CD8-positive, alpha-beta memory T cell (primary cell): ENCODE measurements at regions of chr17 and their contacts with region 1.

Region 1: DNA sequence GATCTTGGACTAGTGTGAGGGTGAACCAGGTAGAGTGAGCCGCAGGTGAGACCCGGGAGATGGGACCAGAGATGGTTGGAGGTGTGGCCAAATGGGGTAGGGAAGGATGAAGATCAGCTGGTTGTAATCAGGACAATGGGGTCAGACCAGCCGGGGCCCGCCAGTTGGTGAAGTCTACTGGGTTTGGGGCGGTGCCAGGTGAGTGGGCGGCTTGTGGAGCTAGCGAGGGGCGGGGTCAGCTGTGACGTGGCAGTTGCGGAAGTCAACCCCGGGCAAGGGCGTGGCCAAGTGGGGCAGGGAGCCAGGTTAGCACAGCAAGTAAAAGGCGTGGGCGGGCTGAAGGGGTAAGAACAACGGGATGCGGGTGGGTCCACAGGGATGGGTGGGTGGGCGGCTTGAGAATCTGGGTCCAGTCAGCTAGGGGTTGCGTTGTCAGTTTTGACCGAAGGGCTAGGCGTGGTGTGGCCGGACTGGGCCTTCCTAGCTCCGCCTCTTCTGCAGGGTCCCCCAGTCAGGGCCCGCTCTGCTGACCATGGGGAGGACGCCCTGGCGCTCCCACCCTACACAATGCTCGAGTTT is 25.5 kb upstream of the ALKBH5 start:
- DNase-seq: peak; percentile 89 to 96 (median 92)
- H3K4me3 ChIP-seq: peak overlapping the region; percentile 51
- H3K4me3 Mint-ChIP-seq: peak overlapping the region; percentile 78 to 92 (median 85)
- H3K27ac ChIP-seq: peak overlapping the region; percentile 14
- H3K27ac Mint-ChIP-seq: peak overlapping the region; percentile 67 to 96 (median 90)
- H3K4me1 ChIP-seq: peaks cover 7% of the 10 kb centered on the region
- H3K4me1 Mint-ChIP-seq: peaks cover 5 to 35% (median 16%) of the 10 kb centered on the region in 3 donors
- H3K27me3 ChIP-seq: no peaks in the 10 kb centered on the region
- H3K27me3 Mint-ChIP-seq: no peaks in the 10 kb centered on the region

Region 2: DNA sequence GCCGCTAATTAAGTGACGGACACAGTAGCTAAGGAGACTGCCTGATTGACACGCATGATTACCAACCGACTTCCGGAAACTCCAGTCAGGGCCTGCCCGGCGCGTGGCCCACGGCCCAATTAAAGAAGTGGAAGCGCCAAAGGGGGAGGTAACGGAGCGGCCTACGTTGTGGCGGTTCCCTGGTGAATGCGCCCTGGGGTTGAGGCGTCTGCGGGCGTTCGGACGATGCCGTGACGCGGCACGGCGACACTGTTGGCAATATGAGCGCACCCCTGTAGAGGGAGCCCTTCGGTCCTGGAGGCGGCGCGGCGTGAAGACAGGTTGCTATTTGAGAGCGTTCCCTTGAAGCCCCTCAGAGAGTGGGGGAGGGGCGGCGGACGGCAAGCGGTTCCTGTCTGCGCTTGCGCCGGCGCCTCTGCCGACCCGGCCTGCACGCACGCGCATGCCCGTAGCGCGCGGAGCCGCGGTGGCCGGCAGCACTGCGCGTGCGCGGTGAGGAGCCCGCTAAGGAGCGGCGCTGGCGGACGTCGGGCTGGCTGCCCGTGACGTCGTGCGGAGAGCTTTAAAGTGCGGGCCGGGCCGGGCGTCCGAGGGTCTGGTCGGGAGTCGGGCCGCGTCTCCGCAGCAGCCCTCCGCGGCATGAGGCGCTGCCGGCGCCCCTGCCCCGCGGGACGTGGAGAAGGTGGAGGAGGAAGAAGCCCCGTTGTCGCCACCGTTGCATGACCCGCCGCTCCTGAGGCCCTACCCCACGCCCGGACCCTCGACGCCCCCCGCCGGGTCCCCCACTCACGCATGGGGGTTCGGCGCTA is 25.4 kb after region 1 on chr17 and contains the start of gene ALKBH5:
- CTCF ChIA-PET with region 1: interaction called, 3 read pairs
- POLR2A ChIA-PET with region 1: interaction called, 10 read pairs
- DNase-seq: peak; percentile 94 to 99 (median 99)
- H3K4me3 ChIP-seq: peak within 1 kb of the TSS; percentile 95
- H3K4me3 Mint-ChIP-seq: peak within 1 kb of the TSS; percentile 94 to 98 (median 96)
- H3K27ac ChIP-seq: peak within 1 kb of the TSS; percentile 97
- H3K27ac Mint-ChIP-seq: peak within 1 kb of the TSS; percentile 97 to 100 (median 99)
- H3K4me1 ChIP-seq: peaks cover 47% of the 10 kb centered on the region
- H3K4me1 Mint-ChIP-seq: peaks cover 41 to 49% (median 47%) of the 10 kb centered on the region in 3 donors
- H3K27me3 ChIP-seq: no peaks in the 10 kb centered on the region
- H3K27me3 Mint-ChIP-seq: peaks cover 0 to 1% of the 10 kb centered on the region in 2 donors
- total RNA-seq, gene ALKBH5: 117 to 123 TPM

Region 3: DNA sequence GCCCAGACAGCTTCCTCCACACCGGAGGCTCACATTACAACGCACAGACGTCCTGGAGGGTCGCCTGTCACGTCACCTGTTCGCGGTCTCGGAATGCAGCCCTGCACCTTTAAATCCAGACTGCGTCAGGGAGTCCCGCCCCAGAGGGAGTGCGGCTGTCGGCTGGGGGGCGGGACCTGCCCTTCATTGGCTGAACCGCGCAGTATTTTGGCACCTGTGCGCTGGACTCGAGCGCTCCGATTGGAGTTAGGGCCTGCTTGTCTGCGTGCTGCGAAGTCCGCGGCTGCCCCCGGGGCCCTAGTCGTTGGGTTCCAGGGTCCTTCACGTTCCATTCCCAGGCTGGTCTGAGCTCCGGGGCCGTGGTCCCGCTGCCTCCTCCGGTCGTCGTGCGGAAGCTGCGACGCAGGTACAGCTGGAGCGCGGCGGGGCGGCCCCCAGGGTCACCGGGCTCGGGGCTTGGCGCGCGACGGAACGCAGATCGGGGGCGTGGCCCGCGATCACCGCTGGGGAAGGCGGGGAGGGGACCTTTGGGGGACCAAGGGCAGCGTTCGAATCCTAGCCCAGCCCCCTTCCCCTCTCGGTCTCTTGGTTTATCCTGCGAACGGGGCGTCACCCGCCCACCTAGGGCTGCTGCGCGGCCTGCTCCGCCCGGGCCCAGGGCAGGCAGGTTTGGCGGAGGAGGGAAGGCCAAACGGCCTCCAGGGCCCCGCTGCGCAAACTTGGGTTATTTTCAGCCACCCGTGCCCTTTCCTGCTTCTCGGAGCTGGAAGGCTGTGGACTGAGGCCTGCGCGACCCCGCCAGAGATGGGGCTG is 102.4 kb after region 1 on chr17 and contains the start of gene MIEF2:
- CTCF ChIA-PET with region 1: no interaction called
- POLR2A ChIA-PET with region 1: no interaction called
- DNase-seq: peak; percentile 88 to 95 (median 90)
- H3K4me3 ChIP-seq: peak within 1 kb of the TSS; percentile 89
- H3K4me3 Mint-ChIP-seq: peak within 1 kb of the TSS; percentile 80 to 97 (median 84)
- H3K27ac ChIP-seq: peak within 1 kb of the TSS; percentile 86
- H3K27ac Mint-ChIP-seq: peak within 1 kb of the TSS; percentile 82 to 93 (median 86)
- H3K4me1 ChIP-seq: peaks cover 50% of the 10 kb centered on the region
- H3K4me1 Mint-ChIP-seq: peaks cover 35 to 64% (median 38%) of the 10 kb centered on the region in 3 donors
- H3K27me3 ChIP-seq: no peaks in the 10 kb centered on the region
- H3K27me3 Mint-ChIP-seq: no peaks in the 10 kb centered on the region
- total RNA-seq, gene MIEF2: 5.5 to 5.6 TPM